Right cardiac atrium (tissue), 5 donors: ENCODE measurements at regions of chr7 and their contacts with region 1.

Region 1: DNA sequence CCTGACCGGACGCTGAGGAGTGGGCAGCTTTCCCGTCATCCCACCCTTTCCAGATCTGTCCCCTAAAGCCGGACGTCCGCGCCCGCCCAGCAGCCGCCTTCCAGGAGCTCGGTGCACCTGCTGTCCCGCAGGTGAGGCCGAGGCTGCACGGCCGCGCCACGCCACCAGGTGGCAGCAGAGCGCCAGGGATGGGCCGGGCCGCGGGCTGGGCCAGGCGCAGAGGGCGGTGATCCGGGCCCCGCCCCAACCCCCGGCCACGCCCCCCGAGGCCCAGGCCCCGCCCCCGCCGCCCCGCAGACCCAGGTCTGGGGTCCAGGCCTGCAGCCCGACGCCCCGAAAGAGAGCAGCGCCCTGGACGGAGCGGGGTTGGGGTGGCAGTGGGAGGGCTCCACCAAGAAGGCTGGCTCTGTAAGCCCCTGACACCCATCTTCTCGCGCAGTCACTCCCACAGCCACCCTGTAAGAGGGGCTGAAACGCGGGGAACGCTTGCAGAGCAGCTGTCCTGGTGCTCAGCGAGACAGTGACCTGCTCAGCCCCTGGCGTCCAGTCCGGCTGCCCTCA is 32.2 kb downstream of the FOXL3 start:
- DNase-seq: peak; percentile 60 to 89 (median 88)
- ATAC-seq: peak; percentile 82 to 88
- H3K4me3 ChIP-seq: no peak overlapping the region
- H3K27ac ChIP-seq: no peak overlapping the region
- H3K4me1 ChIP-seq: no peaks in the 10 kb centered on the region
- H3K27me3 ChIP-seq: no peaks in the 10 kb centered on the region

Region 2: DNA sequence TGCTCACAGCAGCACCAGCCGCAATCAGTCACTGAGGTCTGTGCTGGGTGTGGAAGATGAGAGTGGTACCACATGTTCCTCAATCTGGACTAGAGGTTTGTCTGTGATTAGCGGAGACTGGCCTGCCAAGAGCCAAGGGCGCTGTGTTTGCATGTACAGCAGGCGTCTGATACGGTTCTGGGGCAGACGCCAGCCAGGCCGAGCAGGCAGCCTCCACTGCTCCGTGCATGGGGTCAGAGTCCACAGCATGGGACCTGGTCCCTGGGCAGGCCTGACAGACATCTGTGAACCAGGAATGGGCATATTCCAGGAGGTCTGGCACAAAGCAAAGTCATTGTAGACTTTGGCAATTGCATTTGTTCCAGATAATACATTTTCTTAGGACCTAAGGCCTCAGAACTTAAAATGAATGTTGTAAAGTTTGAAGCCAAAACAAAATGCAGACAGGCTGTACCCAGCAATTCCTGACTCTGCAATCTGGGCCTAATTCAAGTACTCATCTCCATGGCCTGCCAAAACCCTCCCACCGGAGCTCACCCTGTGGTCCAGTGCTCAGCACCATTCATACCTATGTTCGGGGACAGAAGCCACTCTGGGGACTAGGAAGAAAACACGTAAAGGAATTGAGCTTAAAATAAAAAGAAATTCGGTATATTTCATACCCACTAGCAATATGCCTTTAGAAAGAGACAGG is 179.8 kb before region 1 on chr7:
- intact Hi-C with region 1: no loop called
- DNase-seq: peak; percentile 87 to 97 (median 95)
- ATAC-seq: peak; percentile 92 to 96
- H3K4me3 ChIP-seq: no peak overlapping the region
- H3K27ac ChIP-seq: peak overlapping the region; percentile 30
- H3K4me1 ChIP-seq: peaks cover 5% of the 10 kb centered on the region
- H3K27me3 ChIP-seq: no peaks in the 10 kb centered on the region

Region 3: GRCh38 chr7:214410-215212 is 107.6 kb before region 1 on chr7:
- intact Hi-C with region 1: no loop called
- DNase-seq: peak in 2 of 3 donors; percentile 44 to 55
- ATAC-seq: no peak
- H3K4me3 ChIP-seq: no peak overlapping the region
- H3K27ac ChIP-seq: no peak overlapping the region
- H3K4me1 ChIP-seq: peaks cover 3% of the 10 kb centered on the region
- H3K27me3 ChIP-seq: no peaks in the 10 kb centered on the region

Region 4: GRCh38 chr7:381211-382042 is 59.2 kb after region 1 on chr7:
- intact Hi-C with region 1: no loop called
- DNase-seq: peak in 1 of 3 donors; percentile 43
- ATAC-seq: no peak
- H3K4me3 ChIP-seq: no peak overlapping the region
- H3K27ac ChIP-seq: no peak overlapping the region
- H3K4me1 ChIP-seq: no peaks in the 10 kb centered on the region
- H3K27me3 ChIP-seq: no peaks in the 10 kb centered on the region

Region 5: GRCh38 chr7:774161-775109 is 452.2 kb after region 1 on chr7:
- intact Hi-C with region 1: loop called (anchors 2 to 5 kb)
- DNase-seq: peak; percentile 60 to 84 (median 84)
- ATAC-seq: peak; percentile 31 to 54
- H3K4me3 ChIP-seq: no peak overlapping the region
- H3K27ac ChIP-seq: no peak overlapping the region
- H3K4me1 ChIP-seq: peaks cover 6% of the 10 kb centered on the region
- H3K27me3 ChIP-seq: no peaks in the 10 kb centered on the region